Vagina (tissue), 2 donors: ENCODE measurements at regions of chr9 and their contacts with region 1.

Region 1: DNA sequence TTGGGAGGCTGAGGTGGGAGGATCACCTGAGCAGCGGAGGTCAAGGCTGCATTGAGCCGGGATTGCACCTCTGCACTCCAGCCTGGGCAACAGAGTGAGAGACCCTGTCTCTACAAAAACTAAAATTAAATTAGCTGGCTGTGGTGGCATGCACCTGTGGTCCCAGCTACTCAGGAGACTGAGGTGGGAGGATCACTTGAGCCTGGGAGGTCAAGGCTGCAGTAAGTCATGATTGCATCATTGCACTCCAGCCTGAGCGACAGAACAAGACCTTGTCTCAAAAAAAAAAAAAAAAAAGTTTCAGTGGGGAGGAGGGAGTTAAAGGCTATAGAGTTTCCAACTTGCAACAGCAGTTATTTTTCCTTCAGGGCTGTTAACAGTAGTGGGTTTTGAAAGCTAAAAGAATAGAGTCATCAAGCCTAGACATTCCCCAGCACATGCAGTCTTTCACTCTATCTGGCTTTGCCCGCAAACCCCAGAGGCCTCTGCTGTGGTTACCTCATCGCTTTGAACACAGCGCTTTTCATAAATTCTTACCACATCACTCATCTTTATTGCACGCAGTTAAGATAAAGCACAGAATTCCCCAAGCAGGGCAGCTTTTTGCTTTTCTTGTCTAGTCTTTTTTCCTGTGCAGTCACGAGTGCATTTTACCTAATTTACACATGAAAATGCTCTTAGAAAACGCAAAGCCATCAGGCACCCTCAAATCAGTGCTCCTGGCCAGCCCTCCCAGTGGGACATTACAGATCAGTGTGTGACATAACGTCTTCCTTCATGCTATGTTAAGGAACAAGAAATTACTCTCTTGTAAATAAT is 8.7 kb upstream of the SLC2A8 start:
- DNase-seq: no peak
- H3K4me3 ChIP-seq: no peak overlapping the region
- H3K27ac ChIP-seq: peak overlapping the region; percentile 62
- H3K4me1 ChIP-seq: peaks cover 7% of the 10 kb centered on the region
- H3K27me3 ChIP-seq: no peaks in the 10 kb centered on the region
- CTCF ChIP-seq: no peak
- POLR2A ChIP-seq: no peak

Region 2: DNA sequence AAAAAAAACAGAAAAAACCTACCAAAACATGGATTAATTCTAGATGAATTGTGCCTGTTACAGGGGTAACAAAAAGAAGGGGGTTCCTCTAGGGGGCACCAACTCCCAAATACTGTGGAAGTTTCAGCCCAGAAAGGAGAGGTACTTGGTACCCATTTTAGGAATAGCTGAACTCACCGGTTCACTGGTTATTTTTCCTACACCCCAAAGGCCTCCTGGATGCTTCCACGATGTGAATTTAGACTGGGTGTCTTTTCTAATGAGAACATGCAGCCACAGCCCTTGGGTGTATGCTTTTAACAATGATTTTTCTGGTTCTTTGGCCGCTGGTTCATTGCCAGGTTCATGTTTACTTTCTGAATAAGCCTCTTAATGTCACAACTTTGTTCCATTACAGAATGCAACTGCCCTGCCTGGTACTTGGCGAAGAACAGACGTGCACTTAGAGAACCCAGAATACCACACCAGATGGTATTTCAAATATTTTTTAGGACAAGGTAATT is 77.0 kb before region 1 on chr9:
- intact Hi-C with region 1: loop called (anchors 10 kb)
- DNase-seq: no peak
- H3K4me3 ChIP-seq: no peak overlapping the region
- H3K27ac ChIP-seq: peak overlapping the region; percentile 51
- H3K4me1 ChIP-seq: peaks cover 29% of the 10 kb centered on the region
- H3K27me3 ChIP-seq: no peaks in the 10 kb centered on the region
- CTCF ChIP-seq: peak in 1 of 3 experiments; percentile 23
- POLR2A ChIP-seq: no peak

Region 3: GRCh38 chr9:128992995-128993394 is 1604.7 kb after region 1 on chr9:
- intact Hi-C with region 1: no loop called
- DNase-seq: no peak
- H3K4me3 ChIP-seq: no peak overlapping the region
- H3K27ac ChIP-seq: no peak overlapping the region
- H3K4me1 ChIP-seq: peaks cover 2% of the 10 kb centered on the region
- H3K27me3 ChIP-seq: no peaks in the 10 kb centered on the region
- CTCF ChIP-seq: no peak
- POLR2A ChIP-seq: no peak